ENCODE measurements at regions of chr5 and their contacts with region 1.

Region 1: DNA sequence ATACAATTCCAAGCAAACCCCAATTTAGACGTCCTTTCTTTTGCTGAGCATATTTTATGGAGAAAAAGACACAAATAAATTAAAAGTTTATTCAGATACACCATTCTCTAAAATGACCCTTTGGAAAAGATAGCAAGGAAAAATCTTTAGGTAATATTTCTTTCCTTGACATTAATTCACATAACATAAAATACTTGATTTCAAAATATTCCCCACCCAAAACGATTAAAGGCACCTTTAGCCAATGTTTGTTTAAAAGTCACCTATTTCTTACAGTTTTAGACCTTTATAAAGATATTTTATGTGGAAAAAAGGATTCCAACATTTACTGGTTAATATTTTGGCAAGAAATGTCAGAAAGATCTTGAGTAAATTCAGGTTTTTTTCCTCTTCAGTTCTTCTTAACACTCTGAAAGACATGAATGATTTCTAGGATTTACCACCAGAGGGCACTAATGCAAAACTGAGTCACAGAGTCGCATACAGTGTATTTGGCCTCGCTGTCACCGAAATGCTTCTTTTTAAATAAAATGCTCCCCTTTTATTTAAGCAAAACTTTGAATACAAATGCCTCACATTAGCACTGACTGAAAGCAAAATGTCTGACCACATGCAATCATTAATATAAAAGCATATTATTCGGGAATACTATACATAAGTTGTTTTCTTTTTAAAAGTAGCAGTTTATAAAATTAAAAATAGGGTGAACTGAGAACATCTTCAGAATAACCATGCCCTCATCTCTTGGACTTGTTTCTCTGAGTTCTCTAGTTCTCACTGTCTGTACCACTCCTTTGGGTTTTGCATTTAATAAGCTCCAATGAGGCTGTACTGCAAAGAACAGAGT is 122.5 kb downstream of the SLC1A3 start:
- DNase-seq: no peak
- H3K4me3 Mint-ChIP-seq: no peak overlapping the region
- H3K27ac Mint-ChIP-seq: no peak overlapping the region
- H3K4me1 Mint-ChIP-seq: peaks cover 16% of the 10 kb centered on the region
- H3K27me3 Mint-ChIP-seq: peaks cover 8% of the 10 kb centered on the region

Region 2: GRCh38 chr5:36657563-36657995 is 71.3 kb before region 1 on chr5:
- CTCF ChIA-PET with region 1: no interaction called
- DNase-seq: no peak
- H3K4me3 Mint-ChIP-seq: no peak overlapping the region
- H3K27ac Mint-ChIP-seq: no peak overlapping the region
- H3K4me1 Mint-ChIP-seq: no peaks in the 10 kb centered on the region
- H3K27me3 Mint-ChIP-seq: peaks cover 13% of the 10 kb centered on the region

Region 3: GRCh38 chr5:36739751-36740221 is 10.9 kb after region 1 on chr5:
- CTCF ChIA-PET with region 1: interaction called, 16 read pairs
- DNase-seq: peak; percentile 85
- H3K4me3 Mint-ChIP-seq: no peak overlapping the region
- H3K27ac Mint-ChIP-seq: no peak overlapping the region
- H3K4me1 Mint-ChIP-seq: peaks cover 7% of the 10 kb centered on the region
- H3K27me3 Mint-ChIP-seq: peaks cover 34% of the 10 kb centered on the region

Region 4: GRCh38 chr5:36744773-36745589 is 16.1 kb after region 1 on chr5:
- CTCF ChIA-PET with region 1: interaction called, 16 read pairs
- DNase-seq: peak; percentile 42
- H3K4me3 Mint-ChIP-seq: peak overlapping the region; percentile 77
- H3K27ac Mint-ChIP-seq: no peak overlapping the region
- H3K4me1 Mint-ChIP-seq: peaks cover 15% of the 10 kb centered on the region
- H3K27me3 Mint-ChIP-seq: peaks cover 50% of the 10 kb centered on the region

Region 5: GRCh38 chr5:36870399-36871040 is 141.6 kb after region 1 on chr5:
- CTCF ChIA-PET with region 1: interaction called, 15 read pairs
- DNase-seq: no peak
- H3K4me3 Mint-ChIP-seq: no peak overlapping the region
- H3K27ac Mint-ChIP-seq: no peak overlapping the region
- H3K4me1 Mint-ChIP-seq: peaks cover 35% of the 10 kb centered on the region
- H3K27me3 Mint-ChIP-seq: no peaks in the 10 kb centered on the region